ENCODE measurements at regions of chr6 and their contacts with region 1.

Region 1: DNA sequence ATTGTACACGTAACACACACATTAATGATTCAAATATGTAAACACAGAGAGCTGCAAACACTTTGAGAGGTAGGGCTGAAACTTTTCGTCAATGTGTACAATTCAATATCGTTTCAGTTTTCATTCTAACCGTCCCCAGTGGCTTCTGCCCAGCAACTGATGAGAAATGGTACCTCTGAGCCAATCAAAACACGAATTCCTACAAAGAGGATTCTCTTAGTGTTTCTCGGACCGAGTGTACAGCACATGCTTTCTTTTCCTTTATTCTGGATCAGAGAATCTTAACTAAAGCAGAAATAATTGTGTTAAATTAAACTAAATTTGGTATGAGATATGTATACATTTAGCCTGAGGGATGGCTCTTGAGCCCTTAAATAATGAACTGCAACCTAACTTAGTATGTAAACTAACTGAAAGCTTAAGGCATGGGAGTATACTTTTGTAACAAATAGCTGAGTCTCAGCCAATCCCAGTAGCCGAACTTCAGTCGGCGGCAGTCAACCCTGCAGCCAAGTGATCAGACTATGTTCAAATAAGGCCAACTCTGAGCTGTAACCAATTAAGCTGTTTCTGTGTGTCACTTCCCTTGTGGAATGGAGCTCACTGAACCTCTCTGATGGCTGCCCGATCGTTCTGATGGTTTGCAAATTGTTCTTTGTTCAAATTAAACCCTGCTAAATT is 16.1 kb downstream of the BTN2A1 start:
- DNase-seq: peak; percentile 84
- H3K4me3 ChIP-seq: peak overlapping the region; percentile 23 to 38
- H3K27ac ChIP-seq: peak overlapping the region; percentile 83 to 90
- H3K4me1 ChIP-seq: no peaks in the 10 kb centered on the region
- H3K27me3 ChIP-seq: no peaks in the 10 kb centered on the region
- CTCF ChIP-seq: no peak
- POLR2A ChIP-seq: peak; percentile 69

Region 2: GRCh38 chr6:26322645-26323482 is 151.0 kb before region 1 on chr6:
- intact Hi-C with region 1: no loop called
- DNase-seq: no peak
- H3K4me3 ChIP-seq: peak overlapping the region; percentile 19 to 31
- H3K27ac ChIP-seq: no peak overlapping the region
- H3K4me1 ChIP-seq: no peaks in the 10 kb centered on the region
- H3K27me3 ChIP-seq: peaks cover 3% of the 10 kb centered on the region
- CTCF ChIP-seq: no peak
- POLR2A ChIP-seq: no peak

Region 3: GRCh38 chr6:26383624-26384417 is 90.1 kb before region 1 on chr6:
- intact Hi-C with region 1: no loop called
- DNase-seq: peak; percentile 16
- H3K4me3 ChIP-seq: peak overlapping the region; percentile 50 to 58
- H3K27ac ChIP-seq: peak overlapping the region; percentile 82 to 84
- H3K4me1 ChIP-seq: no peaks in the 10 kb centered on the region
- H3K27me3 ChIP-seq: no peaks in the 10 kb centered on the region
- CTCF ChIP-seq: no peak
- POLR2A ChIP-seq: peak; percentile 20

Region 4: DNA sequence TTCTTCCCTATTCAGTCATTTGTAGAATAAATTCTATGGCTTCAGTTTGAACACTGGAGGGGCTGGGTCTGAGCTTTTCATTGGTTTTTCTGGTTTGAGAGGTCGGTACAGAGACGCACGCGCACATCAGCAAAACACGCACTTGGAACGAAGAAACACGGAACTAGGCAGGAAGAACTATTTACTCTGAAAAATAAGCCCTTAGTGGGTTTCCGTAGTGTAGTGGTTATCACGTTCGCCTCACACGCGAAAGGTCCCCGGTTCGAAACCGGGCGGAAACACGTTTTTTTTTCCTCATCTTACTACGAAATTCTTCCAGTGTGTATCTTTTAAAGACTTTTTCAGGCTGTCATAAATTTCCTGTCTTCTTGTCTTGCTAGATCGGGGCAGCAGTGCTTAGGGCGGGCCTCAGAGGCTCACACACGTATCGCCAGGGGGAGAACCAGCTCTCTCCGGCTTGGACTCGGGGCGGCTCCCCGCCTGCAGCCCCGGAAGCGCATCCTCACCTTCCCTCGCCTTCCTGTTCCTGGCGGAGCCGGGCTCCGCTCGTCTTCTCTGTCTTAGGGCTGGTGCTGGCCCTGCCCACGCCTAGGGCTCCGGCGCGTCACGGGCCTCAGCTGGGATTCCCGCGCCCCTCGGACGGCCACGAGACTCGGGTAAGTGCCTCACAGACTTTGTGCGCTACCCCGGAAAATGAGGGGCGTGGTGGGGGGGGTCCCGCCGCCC is 64.1 kb after region 1 on chr6 and contains the start of gene HMGN4:
- intact Hi-C with region 1: loop called (anchors 5 kb)
- DNase-seq: peak; percentile 79
- H3K4me3 ChIP-seq: peak within 1 kb of the TSS; percentile 68 to 72
- H3K27ac ChIP-seq: peak within 1 kb of the TSS; percentile 90 to 91
- H3K4me1 ChIP-seq: no peaks in the 10 kb centered on the region
- H3K27me3 ChIP-seq: no peaks in the 10 kb centered on the region
- CTCF ChIP-seq: peak in 1 of 4 experiments; percentile 22
- POLR2A ChIP-seq: peak; percentile 29
- total RNA-seq, gene HMGN4: 53.5 to 83.0 TPM

Region 5: GRCh38 chr6:27007020-27007419 is 533.1 kb after region 1 on chr6:
- intact Hi-C with region 1: no loop called
- DNase-seq: no peak
- H3K4me3 ChIP-seq: no peak overlapping the region
- H3K27ac ChIP-seq: no peak overlapping the region
- H3K4me1 ChIP-seq: no peaks in the 10 kb centered on the region
- H3K27me3 ChIP-seq: no peaks in the 10 kb centered on the region
- CTCF ChIP-seq: no peak
- POLR2A ChIP-seq: no peak